CD14-positive monocyte (primary cell): ENCODE measurements at regions of chr15 and their contacts with region 1.

Region 1: GRCh38 chr15:27454281-27455075 is 483.5 kb downstream of the GABRG3 start:
- DNase-seq: no peak
- H3K4me3 ChIP-seq: no peak overlapping the region
- H3K4me3 Mint-ChIP-seq: no peak overlapping the region
- H3K27ac ChIP-seq: no peak overlapping the region
- H3K27ac Mint-ChIP-seq: no peak overlapping the region
- H3K4me1 ChIP-seq: no peaks in the 10 kb centered on the region
- H3K4me1 Mint-ChIP-seq: no peaks in the 10 kb centered on the region
- H3K27me3 ChIP-seq: no peaks in the 10 kb centered on the region
- H3K27me3 Mint-ChIP-seq: no peaks in the 10 kb centered on the region
- CTCF ChIP-seq: no peak

Region 2: DNA sequence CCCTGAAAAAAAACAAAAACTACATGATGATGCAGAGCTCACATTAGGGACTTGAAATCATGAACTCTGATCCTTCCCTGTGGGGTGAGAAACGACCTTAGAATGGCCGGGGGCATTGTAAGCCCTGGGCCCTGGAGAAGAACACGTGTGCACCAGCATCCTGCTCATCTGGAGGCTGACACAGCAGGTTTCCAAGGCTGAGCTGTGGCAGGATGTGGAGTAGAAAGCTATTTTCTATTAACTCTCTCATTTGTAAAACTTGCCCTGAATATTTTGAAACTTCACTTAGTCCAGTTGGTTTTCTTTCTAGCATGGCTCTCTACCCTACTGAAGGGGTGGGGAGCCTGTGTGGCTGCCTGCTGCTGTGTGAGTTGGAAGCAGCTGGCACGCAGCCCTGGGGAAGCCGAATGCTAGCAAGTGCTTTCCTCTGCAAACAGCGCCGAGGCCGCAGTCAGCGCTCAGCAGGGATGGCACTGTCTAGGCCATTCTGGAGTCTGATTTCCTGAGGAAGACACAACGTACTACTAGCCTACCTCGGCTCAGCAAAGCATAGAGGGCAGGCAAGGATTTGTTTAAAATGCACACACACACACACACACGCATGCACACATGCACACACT is 425.5 kb before region 1 on chr15:
- intact Hi-C with region 1: no loop called
- DNase-seq: no peak
- H3K4me3 ChIP-seq: no peak overlapping the region
- H3K4me3 Mint-ChIP-seq: no peak overlapping the region
- H3K27ac ChIP-seq: no peak overlapping the region
- H3K27ac Mint-ChIP-seq: no peak overlapping the region
- H3K4me1 ChIP-seq: no peaks in the 10 kb centered on the region
- H3K4me1 Mint-ChIP-seq: no peaks in the 10 kb centered on the region
- H3K27me3 ChIP-seq: no peaks in the 10 kb centered on the region
- H3K27me3 Mint-ChIP-seq: peaks cover 0 to 4% (median 3%) of the 10 kb centered on the region in 3 donors
- CTCF ChIP-seq: no peak

Region 3: GRCh38 chr15:27124287-27124871 is 330.1 kb before region 1 on chr15:
- intact Hi-C with region 1: no loop called
- DNase-seq: no peak
- H3K4me3 ChIP-seq: no peak overlapping the region
- H3K4me3 Mint-ChIP-seq: no peak overlapping the region
- H3K27ac ChIP-seq: no peak overlapping the region
- H3K27ac Mint-ChIP-seq: no peak overlapping the region
- H3K4me1 ChIP-seq: no peaks in the 10 kb centered on the region
- H3K4me1 Mint-ChIP-seq: no peaks in the 10 kb centered on the region
- H3K27me3 ChIP-seq: no peaks in the 10 kb centered on the region
- H3K27me3 Mint-ChIP-seq: no peaks in the 10 kb centered on the region
- CTCF ChIP-seq: no peak

Region 4: GRCh38 chr15:27500206-27500605 is 45.7 kb after region 1 on chr15:
- intact Hi-C with region 1: loop called in 1 of 2 experiments (anchors 10 kb)
- DNase-seq: no peak
- H3K4me3 ChIP-seq: no peak overlapping the region
- H3K4me3 Mint-ChIP-seq: no peak overlapping the region
- H3K27ac ChIP-seq: no peak overlapping the region
- H3K27ac Mint-ChIP-seq: no peak overlapping the region
- H3K4me1 ChIP-seq: no peaks in the 10 kb centered on the region
- H3K4me1 Mint-ChIP-seq: no peaks in the 10 kb centered on the region
- H3K27me3 ChIP-seq: no peaks in the 10 kb centered on the region
- H3K27me3 Mint-ChIP-seq: peaks cover 0 to 2% (median 0%) of the 10 kb centered on the region in 3 donors
- CTCF ChIP-seq: no peak